Dorsolateral prefrontal cortex (tissue), 120 donors: ENCODE measurements at regions of chr3 and their contacts with region 1.

Region 1: GRCh38 chr3:22939349-22939748 is 263.8 kb upstream of the UBE2E2 start:
- DNase-seq: no peak
- H3K4me3 ChIP-seq: no peak overlapping the region
- H3K27ac ChIP-seq: peak overlapping the region in 13 of 59 donors; percentile 0 to 64 (median 33)
- H3K27me3 ChIP-seq: no peaks in the 10 kb centered on the region
- CTCF ChIP-seq: no peak

Region 2: DNA sequence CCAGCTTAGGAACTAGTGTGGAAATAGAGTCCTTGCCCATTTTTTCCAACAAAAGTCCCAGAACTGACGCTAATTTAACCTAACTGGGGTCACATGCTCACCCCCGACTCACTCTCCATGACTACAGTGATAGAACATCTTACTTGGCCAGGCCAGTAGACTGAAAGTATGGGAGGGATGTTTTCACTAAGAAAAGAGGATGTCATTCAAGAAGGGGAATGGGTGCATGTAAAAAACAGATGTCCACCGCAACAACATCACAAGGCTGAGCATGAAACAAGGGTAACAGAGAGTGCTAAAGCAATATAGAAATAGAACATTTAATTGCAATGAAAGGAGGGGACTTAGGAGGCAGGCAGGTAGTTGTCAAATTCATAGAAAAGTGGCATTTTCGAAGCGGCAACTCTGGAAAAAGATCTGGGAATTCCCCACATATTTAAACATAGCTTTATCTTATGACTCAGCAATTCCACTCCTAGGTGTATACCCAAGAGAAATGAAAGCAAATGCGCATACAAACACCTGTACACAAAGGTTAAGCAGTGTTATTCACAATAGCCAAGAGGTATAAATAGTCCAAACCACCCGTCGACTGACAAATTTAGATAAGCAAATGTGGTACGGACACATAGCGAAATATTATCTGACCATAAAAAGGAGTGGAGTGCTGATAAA is 222.7 kb after region 1 on chr3:
- intact Hi-C with region 1: loop called in 1 of 2 experiments (anchors 10 kb)
- DNase-seq: no peak
- H3K4me3 ChIP-seq: no peak overlapping the region
- H3K27ac ChIP-seq: no peak overlapping the region
- H3K27me3 ChIP-seq: no peaks in the 10 kb centered on the region
- CTCF ChIP-seq: no peak